Mammary epithelial cell (primary cell): ENCODE measurements at regions of chr14 and their contacts with region 1.

Region 1: DNA sequence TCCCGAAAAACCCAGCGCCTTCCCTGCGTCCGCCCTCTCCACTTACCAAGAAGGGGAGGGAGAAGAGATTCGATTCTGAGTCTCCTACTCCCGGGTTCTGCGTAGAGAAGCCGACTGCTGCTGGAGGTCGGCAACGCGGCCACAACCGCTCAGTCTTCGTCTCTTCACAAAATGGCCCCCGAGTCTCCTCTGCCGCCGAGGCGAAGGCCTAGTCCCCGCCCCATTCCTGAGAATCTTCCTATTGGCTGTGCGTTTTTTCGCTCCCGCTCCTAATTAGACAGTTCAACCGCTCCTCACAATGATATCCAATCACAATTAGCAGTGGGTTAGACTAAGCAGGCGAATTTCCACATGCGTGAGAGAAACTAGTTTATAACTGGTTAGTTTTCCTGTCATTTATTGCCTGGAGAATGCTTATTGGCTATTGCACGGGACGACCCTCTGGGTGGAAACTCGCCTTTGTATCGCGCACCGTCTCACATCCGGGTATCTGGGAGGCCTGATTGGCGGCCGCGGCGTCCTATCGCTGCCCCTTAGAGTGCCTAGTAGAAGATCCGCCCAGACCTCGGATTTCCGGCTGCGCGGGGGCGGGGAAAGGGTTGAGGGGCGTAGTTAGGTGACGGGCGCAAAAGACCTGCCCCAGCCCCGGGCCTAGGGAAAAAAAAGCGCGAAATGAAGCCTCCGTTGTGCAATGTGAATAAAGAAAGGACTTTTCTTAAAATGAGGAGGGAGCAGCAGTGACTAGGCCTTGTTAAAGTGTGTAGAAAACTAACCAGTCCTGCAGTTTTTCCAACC is at the start of gene HNRNPC:
- DNase-seq: peak; percentile 100
- H3K4me3 ChIP-seq: peak within 1 kb of the TSS; percentile 73 to 99 (median 99)
- H3K27ac ChIP-seq: peak within 1 kb of the TSS; percentile 98
- H3K4me1 ChIP-seq: peaks cover 20% of the 10 kb centered on the region
- H3K27me3 ChIP-seq: no peaks in the 10 kb centered on the region
- CTCF ChIP-seq: no peak
- total RNA-seq, gene HNRNPC: 471 to 576 TPM

Region 2: GRCh38 chr14:21308479-21309237 is 39.2 kb after region 1 on chr14:
- CTCF ChIA-PET with region 1: no interaction called
- dilution Hi-C with region 1: no loop called
- in situ Hi-C with region 1: no loop called
- intact Hi-C with region 1: loop called (anchors 2 kb)
- DNase-seq: peak; percentile 93
- H3K4me3 ChIP-seq: peak overlapping the region; percentile 37 to 43 (median 41)
- H3K27ac ChIP-seq: peak overlapping the region; percentile 36
- H3K4me1 ChIP-seq: peaks cover 13% of the 10 kb centered on the region
- H3K27me3 ChIP-seq: no peaks in the 10 kb centered on the region
- CTCF ChIP-seq: no peak

Region 3: DNA sequence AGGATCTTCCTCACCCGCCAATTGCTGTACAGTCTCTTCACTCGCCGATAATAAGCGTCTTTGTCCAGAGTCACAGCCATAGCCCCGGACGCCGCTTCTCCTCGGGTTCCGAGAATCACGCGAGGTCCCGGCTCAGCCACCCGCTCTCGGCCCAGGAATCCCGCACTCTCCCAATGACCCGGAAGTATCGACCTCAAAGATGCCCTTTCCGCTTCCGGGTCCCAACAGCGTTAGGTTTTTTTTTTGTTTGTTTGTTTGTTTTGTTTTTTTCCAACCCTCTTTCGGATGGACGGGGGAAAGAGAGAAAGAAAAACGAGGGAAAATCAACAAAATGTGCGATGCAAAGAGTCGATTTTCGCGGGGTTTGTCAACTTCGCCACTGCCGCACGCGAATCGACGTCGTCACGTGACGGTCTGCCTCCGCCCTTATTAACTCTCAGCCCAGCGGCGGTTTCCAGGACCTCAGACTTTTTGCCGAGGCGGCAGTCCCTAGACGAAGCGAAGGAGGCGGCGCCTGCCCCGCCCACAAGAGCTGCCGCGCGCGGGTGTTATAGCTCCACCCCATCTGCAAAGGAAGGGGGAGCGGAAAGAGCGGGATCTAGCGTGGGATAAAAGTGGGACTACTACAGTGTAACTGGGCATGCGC is 114.5 kb after region 1 on chr14 and contains the start of gene SUPT16H:
- CTCF ChIA-PET with region 1: no interaction called
- dilution Hi-C with region 1: no loop called
- in situ Hi-C with region 1: no loop called
- intact Hi-C with region 1: loop called (anchors 1 kb)
- DNase-seq: peak; percentile 91
- H3K4me3 ChIP-seq: peak within 1 kb of the TSS; percentile 78 to 96 (median 79)
- H3K27ac ChIP-seq: peak within 1 kb of the TSS; percentile 96
- H3K4me1 ChIP-seq: peaks cover 8% of the 10 kb centered on the region
- H3K27me3 ChIP-seq: no peaks in the 10 kb centered on the region
- CTCF ChIP-seq: no peak
- total RNA-seq, gene SUPT16H: 58.3 to 87.2 TPM